ENCODE measurements at regions of chr3 and their contacts with region 1.

Region 1: DNA sequence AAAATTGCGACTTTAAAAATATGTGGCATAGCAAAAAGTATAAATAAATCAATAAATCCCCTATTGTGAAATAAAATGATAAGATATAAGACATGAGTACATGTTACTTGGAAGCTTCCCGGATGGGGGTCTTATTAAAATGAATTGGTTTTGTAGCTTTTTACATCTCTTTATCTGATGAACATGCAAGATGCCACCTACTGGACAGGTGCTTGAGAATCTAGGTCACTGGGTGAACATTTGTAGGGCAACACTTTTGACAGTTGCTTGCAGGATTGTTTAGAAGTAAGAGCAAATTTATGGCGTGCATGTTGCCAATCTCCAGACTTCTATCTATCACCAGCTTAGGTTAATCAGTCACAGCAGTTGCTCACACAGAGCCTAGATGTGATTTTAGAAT is 362.7 kb upstream of the SUCLG2 start:
- DNase-seq: no peak
- ATAC-seq: no peak
- H3K4me3 ChIP-seq: no peak overlapping the region
- H3K4me3 Mint-ChIP-seq: no peak overlapping the region
- H3K27ac ChIP-seq: no peak overlapping the region
- H3K27ac Mint-ChIP-seq: no peak overlapping the region
- H3K4me1 ChIP-seq: no peaks in the 10 kb centered on the region
- H3K4me1 Mint-ChIP-seq: peaks cover 0 to 17% (median 7%) of the 10 kb centered on the region in 7 donors
- H3K27me3 ChIP-seq: no peaks in the 10 kb centered on the region
- H3K27me3 Mint-ChIP-seq: peaks cover 0 to 2% (median 0%) of the 10 kb centered on the region in 5 donors

Region 2: DNA sequence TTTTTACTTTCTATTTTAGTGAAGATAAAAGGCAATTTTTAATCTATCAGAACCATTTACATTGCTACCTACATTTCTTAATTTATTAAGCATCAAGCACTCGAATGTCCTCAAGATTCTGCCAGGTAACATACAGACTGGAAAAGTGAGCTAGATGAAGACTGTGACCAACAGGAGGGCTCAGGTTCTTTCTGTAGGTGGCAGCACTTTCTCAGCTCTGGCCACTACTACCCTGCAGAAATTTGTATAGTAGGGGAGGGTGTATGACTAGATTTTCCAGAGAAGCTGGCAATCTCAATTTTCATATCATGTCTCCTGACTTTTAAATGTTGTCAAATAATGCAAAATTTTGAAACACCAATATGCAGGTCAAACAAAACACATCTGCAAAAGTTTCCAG is 197.6 kb before region 1 on chr3:
- CTCF ChIA-PET with region 1: no interaction called
- POLR2A ChIA-PET with region 1: no interaction called
- intact Hi-C with region 1: loop called in 1 of 2 experiments (anchors 5 kb)
- DNase-seq: peak in 5 of 9 donors; percentile 10 to 27 (median 21)
- ATAC-seq: no peak
- H3K4me3 ChIP-seq: no peak overlapping the region
- H3K4me3 Mint-ChIP-seq: no peak overlapping the region
- H3K27ac ChIP-seq: no peak overlapping the region
- H3K27ac Mint-ChIP-seq: peak overlapping the region in 1 of 9 donors; percentile 3
- H3K4me1 ChIP-seq: no peaks in the 10 kb centered on the region
- H3K4me1 Mint-ChIP-seq: peaks cover 0 to 10% (median 0%) of the 10 kb centered on the region in 7 donors
- H3K27me3 ChIP-seq: no peaks in the 10 kb centered on the region
- H3K27me3 Mint-ChIP-seq: no peaks in the 10 kb centered on the region

Region 3: DNA sequence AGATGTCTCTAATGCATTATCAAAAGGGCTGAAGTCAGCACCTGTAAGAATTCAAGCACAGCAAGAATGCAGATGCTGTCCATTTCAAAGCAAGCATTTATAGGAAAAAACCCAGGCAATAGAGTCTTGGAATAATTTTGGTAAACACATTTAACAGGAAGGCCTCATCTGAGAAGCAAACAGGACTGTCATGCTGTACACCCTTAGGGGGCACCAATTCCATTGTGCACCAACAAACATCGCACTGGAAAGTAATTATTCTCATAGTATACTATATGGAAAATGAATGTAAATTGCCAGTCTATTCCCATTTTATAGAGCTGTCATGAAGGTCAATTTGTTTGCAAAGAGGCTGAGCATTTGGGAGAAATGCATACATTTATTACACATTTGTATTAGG is 115.4 kb before region 1 on chr3:
- CTCF ChIA-PET with region 1: interaction called, 3 read pairs
- POLR2A ChIA-PET with region 1: no interaction called
- intact Hi-C with region 1: loop called in 1 of 2 experiments (anchors 2 kb)
- DNase-seq: peak in 5 of 9 donors; percentile 17 to 31 (median 24)
- ATAC-seq: peak; percentile 31
- H3K4me3 ChIP-seq: no peak overlapping the region
- H3K4me3 Mint-ChIP-seq: no peak overlapping the region
- H3K27ac ChIP-seq: no peak overlapping the region
- H3K27ac Mint-ChIP-seq: no peak overlapping the region
- H3K4me1 ChIP-seq: peaks cover 0 to under 1% of the 10 kb centered on the region in 2 donors
- H3K4me1 Mint-ChIP-seq: peaks cover 0 to 19% (median 13%) of the 10 kb centered on the region in 7 donors
- H3K27me3 ChIP-seq: no peaks in the 10 kb centered on the region
- H3K27me3 Mint-ChIP-seq: no peaks in the 10 kb centered on the region

Measured in naive thymus-derived CD4-positive, alpha-beta T cell (primary cell).